CD8-positive, alpha-beta T cell (primary cell): ENCODE measurements at regions of chr9 and their contacts with region 1.

Region 1: DNA sequence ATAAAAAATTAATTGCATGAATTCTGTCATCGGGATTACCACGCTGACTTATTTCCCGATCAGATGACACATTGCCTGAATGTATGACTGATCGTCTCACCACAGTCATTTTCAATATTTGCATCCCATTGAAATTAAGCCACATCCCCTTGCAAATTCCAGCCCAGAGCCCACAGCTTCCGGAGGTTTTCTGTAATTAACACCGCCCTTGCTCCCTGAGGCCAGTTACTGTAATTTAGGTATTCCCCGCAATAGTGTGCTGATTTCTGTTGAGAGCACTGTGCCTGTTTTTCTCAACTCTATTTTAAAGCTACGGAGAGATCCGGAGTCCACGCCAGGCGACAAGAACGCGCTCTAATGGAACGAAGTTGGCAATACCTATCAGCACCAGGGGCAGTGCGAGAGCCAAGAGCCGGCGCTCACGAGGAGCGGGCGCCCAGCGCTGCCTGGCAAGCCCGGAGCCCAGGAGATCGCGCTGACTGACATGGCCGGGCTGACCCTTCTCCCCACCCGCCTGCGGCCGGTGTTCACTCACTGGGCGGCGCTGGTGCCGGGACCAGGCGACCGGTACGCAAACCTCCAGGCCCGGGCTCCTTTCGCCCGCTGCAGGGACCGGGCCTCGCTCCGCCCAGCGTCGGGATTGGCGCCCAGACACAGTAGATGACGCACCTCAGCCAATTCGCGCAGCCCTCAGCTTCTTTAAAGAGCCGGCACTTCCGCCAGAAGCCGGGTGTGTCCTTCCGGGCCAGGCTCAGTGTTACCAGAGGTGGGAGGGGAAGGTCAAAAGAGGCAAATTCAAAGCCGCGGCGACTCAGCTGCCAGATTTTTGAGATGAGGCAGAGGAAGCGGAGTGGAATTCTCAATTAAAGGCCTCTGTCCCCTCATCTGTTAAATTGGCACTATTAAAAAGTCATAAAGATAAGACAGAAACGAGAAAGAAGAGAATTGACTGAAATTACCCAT is at the start of gene PLGRKT:
- DNase-seq: peak; percentile 76 to 96 (median 90)
- ATAC-seq: peak; percentile 96
- H3K4me3 ChIP-seq: peak within 1 kb of the TSS; percentile 71 to 76
- H3K4me3 Mint-ChIP-seq: peak within 1 kb of the TSS; percentile 89
- H3K27ac ChIP-seq: peak within 1 kb of the TSS; percentile 89 to 90
- H3K27ac Mint-ChIP-seq: peak within 1 kb of the TSS; percentile 96
- H3K4me1 ChIP-seq: peaks cover 23% of the 10 kb centered on the region
- H3K4me1 Mint-ChIP-seq: peaks cover 36% of the 10 kb centered on the region
- H3K27me3 ChIP-seq: no peaks in the 10 kb centered on the region
- H3K27me3 Mint-ChIP-seq: no peaks in the 10 kb centered on the region
- CTCF ChIP-seq: peak; percentile 10
- total RNA-seq, gene PLGRKT: 10.1 to 12.8 TPM

Region 2: DNA sequence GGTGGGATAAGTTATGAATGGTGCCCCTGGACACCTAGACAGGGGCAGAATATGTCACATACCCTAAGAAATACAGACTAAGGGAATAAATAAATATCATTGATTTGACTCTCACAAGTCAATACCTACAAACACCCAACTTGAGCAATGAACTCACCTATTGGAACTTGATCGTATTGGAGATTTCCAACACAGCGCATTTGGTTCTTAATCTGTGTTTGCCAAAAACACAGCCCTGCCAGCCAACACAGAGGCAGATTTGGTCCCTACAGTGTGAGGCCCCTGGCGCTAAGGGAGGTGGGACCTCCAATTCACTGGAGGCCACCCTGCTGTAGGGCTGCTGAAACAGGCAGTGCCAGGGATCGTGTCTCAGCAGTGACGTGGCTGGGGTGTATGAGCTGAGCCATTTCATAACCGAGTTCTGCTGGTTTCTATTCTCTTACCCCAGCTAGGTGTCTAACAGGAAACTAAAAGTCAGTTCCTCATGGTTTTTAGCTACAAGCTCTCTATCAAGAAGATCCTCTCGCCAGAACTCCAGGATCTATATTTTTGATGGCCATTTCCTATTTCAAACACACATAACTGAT is 862.8 kb before region 1 on chr9:
- CTCF ChIA-PET with region 1: no interaction called
- POLR2A ChIA-PET with region 1: no interaction called
- intact Hi-C with region 1: no loop called
- DNase-seq: no peak
- ATAC-seq: no peak
- H3K4me3 ChIP-seq: no peak overlapping the region
- H3K4me3 Mint-ChIP-seq: no peak overlapping the region
- H3K27ac ChIP-seq: no peak overlapping the region
- H3K27ac Mint-ChIP-seq: no peak overlapping the region
- H3K4me1 ChIP-seq: peaks cover 13% of the 10 kb centered on the region
- H3K4me1 Mint-ChIP-seq: peaks cover 35% of the 10 kb centered on the region
- H3K27me3 ChIP-seq: no peaks in the 10 kb centered on the region
- H3K27me3 Mint-ChIP-seq: no peaks in the 10 kb centered on the region
- CTCF ChIP-seq: no peak

Region 3: DNA sequence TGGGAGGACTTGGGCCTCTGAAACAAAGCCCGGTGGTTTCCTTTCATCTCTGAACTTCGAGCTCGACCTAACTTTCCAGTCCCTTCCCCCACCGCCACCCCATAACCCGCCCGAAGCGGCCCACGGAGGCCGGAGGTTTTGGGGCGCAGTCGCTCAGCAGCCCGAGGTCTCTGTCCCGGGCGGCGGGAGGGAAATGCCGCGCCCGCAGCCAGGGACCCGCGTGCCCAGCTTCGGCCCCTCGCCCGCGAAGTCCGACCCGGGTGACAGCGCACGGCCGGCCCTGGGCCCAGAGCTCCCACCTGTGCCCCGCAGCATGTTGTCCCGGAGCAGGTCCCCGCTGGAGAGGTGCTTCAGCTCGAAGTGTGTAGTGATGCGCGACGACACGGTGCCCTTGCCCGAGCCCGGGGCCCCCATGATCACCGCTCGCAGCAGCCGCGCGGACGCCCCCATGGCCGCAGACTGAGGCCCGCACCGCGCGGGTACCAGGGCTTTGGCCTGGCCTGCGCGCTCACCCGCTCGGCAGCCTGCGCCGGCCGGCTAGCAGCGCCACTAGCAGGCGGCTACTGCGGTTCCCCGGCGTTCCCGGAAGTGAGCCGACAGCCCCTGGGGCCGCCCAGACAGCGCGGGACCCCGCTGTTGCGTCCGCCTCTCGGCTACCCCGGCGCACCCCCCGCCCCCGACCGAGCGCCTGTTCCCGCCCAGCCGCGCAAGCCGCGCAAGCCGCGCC is 696.7 kb before region 1 on chr9 and contains the start of gene AK3:
- CTCF ChIA-PET with region 1: no interaction called
- POLR2A ChIA-PET with region 1: interaction called, 3 read pairs
- intact Hi-C with region 1: loop called in 1 of 2 experiments (anchors 5 kb)
- DNase-seq: peak; percentile 71 to 94 (median 86)
- ATAC-seq: peak; percentile 93
- H3K4me3 ChIP-seq: peak within 1 kb of the TSS; percentile 76 to 97
- H3K4me3 Mint-ChIP-seq: peak within 1 kb of the TSS; percentile 87
- H3K27ac ChIP-seq: peak within 1 kb of the TSS; percentile 70 to 86
- H3K27ac Mint-ChIP-seq: peak within 1 kb of the TSS; percentile 96
- H3K4me1 ChIP-seq: peaks cover 30% of the 10 kb centered on the region
- H3K4me1 Mint-ChIP-seq: peaks cover 37% of the 10 kb centered on the region
- H3K27me3 ChIP-seq: no peaks in the 10 kb centered on the region
- H3K27me3 Mint-ChIP-seq: no peaks in the 10 kb centered on the region
- CTCF ChIP-seq: no peak
- total RNA-seq, gene AK3: 15.2 to 18.8 TPM

Region 4: GRCh38 chr9:5186416-5187169 is 250.9 kb before region 1 on chr9:
- CTCF ChIA-PET with region 1: interaction called, 97 read pairs
- POLR2A ChIA-PET with region 1: interaction called, 6 read pairs
- intact Hi-C with region 1: loop called (anchors 1 to 5 kb)
- DNase-seq: peak; percentile 31 to 84 (median 61)
- ATAC-seq: peak; percentile 94
- H3K4me3 ChIP-seq: no peak overlapping the region
- H3K4me3 Mint-ChIP-seq: no peak overlapping the region
- H3K27ac ChIP-seq: no peak overlapping the region
- H3K27ac Mint-ChIP-seq: no peak overlapping the region
- H3K4me1 ChIP-seq: no peaks in the 10 kb centered on the region
- H3K4me1 Mint-ChIP-seq: peaks cover 6% of the 10 kb centered on the region
- H3K27me3 ChIP-seq: no peaks in the 10 kb centered on the region
- H3K27me3 Mint-ChIP-seq: no peaks in the 10 kb centered on the region
- CTCF ChIP-seq: peak; percentile 76

Region 5: GRCh38 chr9:5425006-5425628 is 12.4 kb before region 1 on chr9:
- CTCF ChIA-PET with region 1: interaction called, 12 read pairs
- POLR2A ChIA-PET with region 1: interaction called, 5 read pairs
- intact Hi-C with region 1: no loop called
- DNase-seq: peak in 2 of 9 experiments; percentile 56 to 65
- ATAC-seq: peak; percentile 59
- H3K4me3 ChIP-seq: no peak overlapping the region
- H3K4me3 Mint-ChIP-seq: no peak overlapping the region
- H3K27ac ChIP-seq: no peak overlapping the region
- H3K27ac Mint-ChIP-seq: no peak overlapping the region
- H3K4me1 ChIP-seq: no peaks in the 10 kb centered on the region
- H3K4me1 Mint-ChIP-seq: peaks cover 9% of the 10 kb centered on the region
- H3K27me3 ChIP-seq: no peaks in the 10 kb centered on the region
- H3K27me3 Mint-ChIP-seq: no peaks in the 10 kb centered on the region
- CTCF ChIP-seq: peak; percentile 88

Region 6: GRCh38 chr9:5470122-5470521 is 32.6 kb after region 1 on chr9:
- CTCF ChIA-PET with region 1: no interaction called
- POLR2A ChIA-PET with region 1: no interaction called
- intact Hi-C with region 1: no loop called
- DNase-seq: no peak
- ATAC-seq: no peak
- H3K4me3 ChIP-seq: no peak overlapping the region
- H3K4me3 Mint-ChIP-seq: no peak overlapping the region
- H3K27ac ChIP-seq: no peak overlapping the region
- H3K27ac Mint-ChIP-seq: no peak overlapping the region
- H3K4me1 ChIP-seq: no peaks in the 10 kb centered on the region
- H3K4me1 Mint-ChIP-seq: no peaks in the 10 kb centered on the region
- H3K27me3 ChIP-seq: no peaks in the 10 kb centered on the region
- H3K27me3 Mint-ChIP-seq: no peaks in the 10 kb centered on the region
- CTCF ChIP-seq: no peak

Region 7: DNA sequence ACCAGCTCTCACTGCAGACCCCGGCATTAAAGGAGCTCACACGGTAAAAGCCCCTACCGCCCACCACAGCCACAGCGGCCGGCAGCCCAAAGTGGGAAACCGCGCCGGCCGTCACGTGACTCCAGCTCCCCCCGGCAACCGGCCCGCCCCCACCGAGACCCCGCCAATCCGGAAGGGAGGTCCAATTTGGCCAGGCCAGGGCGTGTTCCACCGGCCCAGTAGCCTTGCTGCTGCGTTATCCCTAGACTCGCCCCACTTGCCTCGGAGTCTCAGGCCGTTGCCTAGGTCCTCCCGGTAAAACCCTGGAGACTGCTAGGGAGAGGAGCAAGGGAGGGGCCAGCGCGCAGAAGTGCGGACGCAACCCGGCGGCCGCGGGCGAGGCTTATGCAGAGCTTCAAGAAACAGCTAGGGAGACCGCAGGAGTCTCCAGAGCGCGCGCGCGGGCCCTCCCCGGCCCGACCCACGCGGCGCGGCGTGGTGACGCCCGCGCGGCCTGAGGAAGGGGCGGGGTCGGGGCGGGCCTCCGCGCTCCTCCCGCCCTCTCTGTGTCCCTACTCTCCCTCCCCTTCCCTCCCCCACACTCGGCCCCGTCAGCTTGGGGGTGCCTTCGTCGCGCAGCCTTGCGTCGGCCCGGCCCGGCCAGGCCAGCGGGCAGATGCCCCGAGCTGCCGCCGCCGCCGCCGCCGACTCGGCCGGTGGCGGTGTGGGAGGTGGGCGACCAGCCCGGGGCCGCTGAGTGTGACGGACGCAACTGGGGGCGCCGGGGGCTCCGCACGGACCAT is 191.2 kb after region 1 on chr9 and contains the start of gene RIC1:
- CTCF ChIA-PET with region 1: interaction called, 4 read pairs
- POLR2A ChIA-PET with region 1: interaction called, 17 read pairs
- intact Hi-C with region 1: loop called (anchors 1 to 2 kb)
- DNase-seq: peak; percentile 74 to 96 (median 87)
- ATAC-seq: peak; percentile 81
- H3K4me3 ChIP-seq: peak within 1 kb of the TSS; percentile 73 to 95
- H3K4me3 Mint-ChIP-seq: peak within 1 kb of the TSS; percentile 98
- H3K27ac ChIP-seq: peak within 1 kb of the TSS; percentile 84 to 88
- H3K27ac Mint-ChIP-seq: peak within 1 kb of the TSS; percentile 99
- H3K4me1 ChIP-seq: peaks cover 53% of the 10 kb centered on the region
- H3K4me1 Mint-ChIP-seq: peaks cover 63% of the 10 kb centered on the region
- H3K27me3 ChIP-seq: no peaks in the 10 kb centered on the region
- H3K27me3 Mint-ChIP-seq: no peaks in the 10 kb centered on the region
- CTCF ChIP-seq: no peak
- total RNA-seq, gene RIC1: 17.0 to 17.4 TPM

Region 8: GRCh38 chr9:6008169-6008979 is 570.8 kb after region 1 on chr9:
- CTCF ChIA-PET with region 1: no interaction called
- POLR2A ChIA-PET with region 1: no interaction called
- intact Hi-C with region 1: loop called (anchors 5 to 10 kb)
- DNase-seq: peak; percentile 89 to 99 (median 93)
- ATAC-seq: peak; percentile 72
- H3K4me3 ChIP-seq: peak overlapping the region; percentile 75 to 77
- H3K4me3 Mint-ChIP-seq: peak overlapping the region; percentile 85
- H3K27ac ChIP-seq: peak overlapping the region; percentile 82 to 94
- H3K27ac Mint-ChIP-seq: peak overlapping the region; percentile 89
- H3K4me1 ChIP-seq: peaks cover 32% of the 10 kb centered on the region
- H3K4me1 Mint-ChIP-seq: peaks cover 54% of the 10 kb centered on the region
- H3K27me3 ChIP-seq: no peaks in the 10 kb centered on the region
- H3K27me3 Mint-ChIP-seq: no peaks in the 10 kb centered on the region
- CTCF ChIP-seq: no peak